Activated B cell treated with CpG ODN at 0.5 μM for 24 hours (primary cell): ENCODE measurements at regions of chr16 and their contacts with region 1.

Region 1: DNA sequence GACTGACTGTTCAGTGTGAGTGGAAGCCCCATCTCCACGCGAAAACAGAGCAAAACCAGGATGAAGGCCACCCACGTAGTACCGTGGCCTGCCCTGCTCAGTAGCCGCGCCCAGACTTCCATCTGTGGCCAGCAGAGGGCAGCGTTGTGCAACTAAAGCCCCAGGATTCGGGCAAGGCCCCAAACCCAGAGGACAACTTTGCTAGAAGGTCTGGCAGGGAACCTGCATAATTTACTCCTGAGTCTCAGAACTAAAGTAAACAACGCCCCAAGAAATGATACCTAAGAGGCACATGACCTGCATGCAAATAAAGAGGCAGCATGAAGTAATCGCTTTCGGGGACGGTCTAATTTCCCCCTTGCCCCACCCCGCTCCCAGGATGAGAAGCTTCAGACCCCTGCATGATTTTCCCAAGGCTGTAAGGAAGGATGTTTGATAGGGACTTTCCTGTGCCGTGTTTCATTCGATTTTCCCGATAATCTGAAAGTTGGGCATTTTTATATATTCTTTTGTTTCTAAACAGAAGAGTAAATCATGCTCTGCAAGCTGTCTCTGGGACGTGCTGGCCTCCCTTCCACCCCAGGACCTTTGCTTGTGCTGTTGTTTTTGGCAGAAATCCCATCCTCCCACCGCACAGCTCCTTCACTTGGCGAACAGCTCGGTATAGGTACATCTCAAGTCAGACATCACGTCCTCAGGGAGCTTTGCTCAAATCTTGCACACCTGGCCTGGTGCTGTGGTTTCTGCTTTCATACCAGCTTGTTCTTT is 18.6 kb downstream of the HSBP1 start:
- DNase-seq: peak; percentile 78
- ATAC-seq: peak; percentile 94
- H3K4me3 Mint-ChIP-seq: no peak overlapping the region
- H3K27ac Mint-ChIP-seq: no peak overlapping the region
- H3K4me1 Mint-ChIP-seq: peaks cover 7% of the 10 kb centered on the region
- H3K27me3 Mint-ChIP-seq: peaks cover 5% of the 10 kb centered on the region
- CTCF ChIP-seq: peak; percentile 59

Region 2: DNA sequence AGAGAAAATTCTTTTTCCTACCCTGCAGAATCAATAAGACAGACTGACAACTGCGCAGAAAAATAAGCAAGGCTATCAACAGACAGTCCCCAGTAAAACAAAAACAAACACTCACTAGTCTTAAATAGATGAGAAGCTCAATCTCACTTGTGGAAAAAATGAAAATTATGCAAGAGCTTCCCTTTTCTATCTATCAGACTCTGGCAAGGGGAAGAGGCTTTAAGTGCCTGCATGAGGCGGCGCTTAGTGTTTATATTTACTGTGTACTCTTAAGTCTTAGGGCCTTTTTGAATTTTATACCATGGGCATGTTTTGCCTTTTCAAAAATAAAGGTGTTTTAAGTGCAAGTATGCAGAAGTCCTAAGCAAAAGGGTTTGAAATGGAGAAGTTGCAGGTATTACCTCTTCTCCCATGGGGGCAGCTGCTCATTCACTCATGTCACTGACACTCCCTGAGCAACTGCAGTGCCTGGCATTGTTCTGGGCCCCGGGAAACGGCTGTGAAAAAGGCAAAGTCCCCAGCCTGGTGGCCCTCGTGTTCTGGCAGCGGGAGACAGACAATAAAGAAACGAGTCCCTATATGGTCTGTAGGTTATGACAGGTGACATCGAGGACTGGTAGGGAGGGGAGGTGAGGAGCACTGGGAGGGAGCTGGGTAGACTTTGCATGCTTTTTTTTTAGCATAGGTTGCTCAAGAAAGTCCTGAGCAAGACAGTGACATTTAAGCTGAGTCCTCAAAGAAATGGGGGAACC is 16.6 kb after region 1 on chr16:
- CTCF ChIA-PET with region 1: interaction called, 9 read pairs
- POLR2A ChIA-PET with region 1: no interaction called
- intact Hi-C with region 1: loop called (anchors 1 kb)
- DNase-seq: peak; percentile 35
- ATAC-seq: peak; percentile 89
- H3K4me3 Mint-ChIP-seq: peak overlapping the region; percentile 76
- H3K27ac Mint-ChIP-seq: peak overlapping the region; percentile 78
- H3K4me1 Mint-ChIP-seq: peaks cover 48% of the 10 kb centered on the region
- H3K27me3 Mint-ChIP-seq: peaks cover 7% of the 10 kb centered on the region
- CTCF ChIP-seq: no peak

Region 3: GRCh38 chr16:83878838-83879237 is 52.5 kb after region 1 on chr16:
- CTCF ChIA-PET with region 1: no interaction called
- POLR2A ChIA-PET with region 1: no interaction called
- intact Hi-C with region 1: loop called (anchors 1 kb)
- DNase-seq: no peak
- ATAC-seq: no peak
- H3K4me3 Mint-ChIP-seq: no peak overlapping the region
- H3K27ac Mint-ChIP-seq: no peak overlapping the region
- H3K4me1 Mint-ChIP-seq: no peaks in the 10 kb centered on the region
- H3K27me3 Mint-ChIP-seq: peaks cover 25% of the 10 kb centered on the region
- CTCF ChIP-seq: no peak

Region 4: GRCh38 chr16:83898463-83899271 is 72.3 kb after region 1 on chr16 and contains the start of gene MLYCD:
- CTCF ChIA-PET with region 1: no interaction called
- POLR2A ChIA-PET with region 1: no interaction called
- intact Hi-C with region 1: loop called (anchors 1 kb)
- DNase-seq: peak; percentile 73
- ATAC-seq: peak; percentile 95
- H3K4me3 Mint-ChIP-seq: peak within 1 kb of the TSS; percentile 93
- H3K27ac Mint-ChIP-seq: peak within 1 kb of the TSS; percentile 75
- H3K4me1 Mint-ChIP-seq: peaks cover 28% of the 10 kb centered on the region
- H3K27me3 Mint-ChIP-seq: peaks cover 10% of the 10 kb centered on the region
- CTCF ChIP-seq: no peak
- total RNA-seq, gene MLYCD: 8.7 and 10.8 TPM in 2 replicates

Region 5: GRCh38 chr16:83926726-83927397 is 100.5 kb after region 1 on chr16:
- CTCF ChIA-PET with region 1: interaction called, 4 read pairs
- POLR2A ChIA-PET with region 1: no interaction called
- intact Hi-C with region 1: loop called (anchors 1 kb)
- DNase-seq: peak; percentile 56
- ATAC-seq: peak; percentile 83
- H3K4me3 Mint-ChIP-seq: no peak overlapping the region
- H3K27ac Mint-ChIP-seq: no peak overlapping the region
- H3K4me1 Mint-ChIP-seq: peaks cover 5% of the 10 kb centered on the region
- H3K27me3 Mint-ChIP-seq: no peaks in the 10 kb centered on the region
- CTCF ChIP-seq: no peak

Region 6: GRCh38 chr16:83952940-83953795 is 126.8 kb after region 1 on chr16 and contains the start of gene OSGIN1:
- CTCF ChIA-PET with region 1: interaction called, 4 read pairs
- POLR2A ChIA-PET with region 1: no interaction called
- intact Hi-C with region 1: loop called (anchors 1 kb)
- DNase-seq: peak; percentile 58
- ATAC-seq: peak; percentile 88
- H3K4me3 Mint-ChIP-seq: peak within 1 kb of the TSS; percentile 77
- H3K27ac Mint-ChIP-seq: no peak within 1 kb of the TSS
- H3K4me1 Mint-ChIP-seq: peaks cover 8% of the 10 kb centered on the region
- H3K27me3 Mint-ChIP-seq: peaks cover 20% of the 10 kb centered on the region
- CTCF ChIP-seq: no peak
- total RNA-seq, gene OSGIN1: 1.6 TPM in 2 replicates

Region 7: GRCh38 chr16:84062734-84063640 is 236.7 kb after region 1 on chr16:
- CTCF ChIA-PET with region 1: interaction called, 12 read pairs
- POLR2A ChIA-PET with region 1: no interaction called
- intact Hi-C with region 1: no loop called
- DNase-seq: peak; percentile 46
- ATAC-seq: peak; percentile 47
- H3K4me3 Mint-ChIP-seq: no peak overlapping the region
- H3K27ac Mint-ChIP-seq: no peak overlapping the region
- H3K4me1 Mint-ChIP-seq: no peaks in the 10 kb centered on the region
- H3K27me3 Mint-ChIP-seq: no peaks in the 10 kb centered on the region
- CTCF ChIP-seq: peak; percentile 48

Region 8: GRCh38 chr16:84121007-84121406 is 294.7 kb after region 1 on chr16:
- CTCF ChIA-PET with region 1: no interaction called
- POLR2A ChIA-PET with region 1: no interaction called
- intact Hi-C with region 1: no loop called
- DNase-seq: no peak
- ATAC-seq: no peak
- H3K4me3 Mint-ChIP-seq: no peak overlapping the region
- H3K27ac Mint-ChIP-seq: no peak overlapping the region
- H3K4me1 Mint-ChIP-seq: peaks cover 24% of the 10 kb centered on the region
- H3K27me3 Mint-ChIP-seq: no peaks in the 10 kb centered on the region
- CTCF ChIP-seq: no peak